RWPE1 (cell line): ENCODE measurements at regions of chr20 and their contacts with region 1.

Region 1: GRCh38 chr20:32385541-32385940 is 27.4 kb downstream of the ASXL1 start:
- DNase-seq: no peak
- H3K27ac ChIP-seq: no peak overlapping the region
- CTCF ChIP-seq: no peak

Region 2: GRCh38 chr20:32368925-32369324 is 16.6 kb before region 1 on chr20:
- CTCF ChIA-PET with region 1: no interaction called
- POLR2A ChIA-PET with region 1: no interaction called
- DNase-seq: no peak
- H3K27ac ChIP-seq: no peak overlapping the region
- CTCF ChIP-seq: no peak

Region 3: DNA sequence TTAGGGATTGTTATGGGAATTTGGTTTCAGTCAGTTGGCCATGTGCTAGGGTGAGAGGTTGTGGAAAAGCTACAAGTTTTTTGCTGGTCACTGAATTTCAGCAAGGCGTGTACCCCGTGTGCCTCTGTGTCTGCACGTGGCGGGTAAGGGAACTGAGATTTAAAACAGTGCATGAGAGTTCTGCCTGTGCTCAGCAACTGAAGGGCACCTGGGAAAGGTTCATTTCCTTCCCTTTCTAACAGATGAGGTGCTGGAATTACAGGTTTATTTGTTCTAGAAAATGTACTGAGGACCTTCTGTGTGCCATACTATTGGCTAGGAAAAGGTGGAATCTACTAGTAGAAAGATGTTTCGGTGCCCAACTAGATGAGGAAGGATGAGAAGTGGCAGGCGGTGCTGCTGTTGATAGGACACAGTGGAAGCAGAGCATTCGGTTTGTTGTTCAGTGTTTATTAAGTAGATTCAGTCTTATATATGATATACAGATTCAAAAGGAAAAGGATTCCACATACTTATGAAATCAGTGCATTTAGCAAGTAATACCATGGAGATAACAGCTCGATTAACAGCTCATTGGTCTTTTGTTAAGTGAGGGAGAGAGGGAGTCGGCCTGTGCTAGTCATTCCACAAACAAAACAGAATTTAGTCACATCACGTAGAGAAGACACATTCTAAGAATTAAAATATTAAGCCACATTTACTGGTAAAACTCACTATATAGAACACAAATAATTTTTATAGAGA is 57.3 kb after region 1 on chr20:
- CTCF ChIA-PET with region 1: interaction called, 10 read pairs
- POLR2A ChIA-PET with region 1: no interaction called
- DNase-seq: no peak
- H3K27ac ChIP-seq: no peak overlapping the region
- CTCF ChIP-seq: no peak